ENCODE measurements at regions of chr14 and their contacts with region 1.

Region 1: GRCh38 chr14:72836085-72836484 is 57.8 kb downstream of the DPF3 start:
- DNase-seq: no peak
- ATAC-seq: no peak
- H3K4me3 ChIP-seq: no peak overlapping the region
- H3K27ac ChIP-seq: no peak overlapping the region
- H3K4me1 ChIP-seq: no peaks in the 10 kb centered on the region
- H3K27me3 ChIP-seq: no peaks in the 10 kb centered on the region

Region 2: DNA sequence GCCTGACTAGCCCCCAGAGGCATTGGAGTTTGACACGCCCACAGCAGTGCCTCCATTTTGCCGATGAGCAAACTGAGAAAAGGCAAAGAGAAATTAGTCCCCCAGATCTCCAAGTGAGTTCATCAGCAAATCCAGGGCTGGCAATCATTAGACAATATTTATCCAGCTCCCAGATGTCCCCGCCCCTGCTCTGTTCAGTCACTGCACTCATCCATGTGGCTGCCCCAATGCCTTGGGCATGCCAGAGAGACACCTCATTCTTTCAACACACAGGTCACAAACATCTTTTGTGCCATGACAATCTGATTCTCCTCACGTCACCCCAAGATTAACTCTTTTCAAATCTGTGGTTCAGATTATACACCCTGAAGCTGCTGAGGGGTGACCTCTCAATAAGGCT is 14.3 kb after region 1 on chr14:
- intact Hi-C with region 1: loop called in 1 of 2 experiments (anchors 2 kb)
- DNase-seq: no peak
- ATAC-seq: no peak
- H3K4me3 ChIP-seq: no peak overlapping the region
- H3K27ac ChIP-seq: no peak overlapping the region
- H3K4me1 ChIP-seq: peaks cover 0 to 3% of the 10 kb centered on the region in 2 donors
- H3K27me3 ChIP-seq: no peaks in the 10 kb centered on the region